Caco-2 (cell line): ENCODE measurements at regions of chr13 and their contacts with region 1.

Region 1: GRCh38 chr13:81872581-81872980 is 1531.7 kb upstream of the SPRY2 start:
- DNase-seq: peak in 1 of 2 experiments; percentile 53
- H3K4me3 ChIP-seq: no peak overlapping the region
- H3K4me3 Mint-ChIP-seq: no peak overlapping the region
- H3K27ac Mint-ChIP-seq: no peak overlapping the region
- H3K4me1 ChIP-seq: no peaks in the 10 kb centered on the region
- H3K4me1 Mint-ChIP-seq: peaks cover 6% of the 10 kb centered on the region
- H3K27me3 ChIP-seq: no peaks in the 10 kb centered on the region
- H3K27me3 Mint-ChIP-seq: peaks cover 3% of the 10 kb centered on the region
- CTCF ChIP-seq: peak; percentile 32 to 36

Region 2: DNA sequence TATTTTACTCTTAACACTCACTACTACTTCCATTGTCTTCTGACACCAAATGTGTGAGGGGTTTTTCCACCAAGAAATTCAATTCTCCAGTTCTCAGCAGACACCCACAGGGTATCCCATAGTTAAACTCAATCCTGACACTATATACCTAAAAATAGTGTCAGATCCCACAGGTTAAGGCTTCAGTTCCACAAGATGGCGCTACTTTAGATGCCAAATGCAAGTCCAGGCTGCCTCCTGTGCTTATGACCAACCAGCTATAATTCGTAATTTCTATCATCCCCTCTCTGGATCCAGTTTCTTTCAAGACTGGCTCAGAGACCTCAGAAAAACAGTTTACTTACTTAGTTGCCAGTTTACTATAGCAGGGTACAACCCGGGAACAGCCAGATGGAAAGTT is 385.4 kb before region 1 on chr13:
- CTCF ChIA-PET with region 1: no interaction called
- POLR2A ChIA-PET with region 1: no interaction called
- intact Hi-C with region 1: loop called (anchors 1 kb)
- DNase-seq: peak; percentile 52 to 58
- H3K4me3 ChIP-seq: no peak overlapping the region
- H3K4me3 Mint-ChIP-seq: no peak overlapping the region
- H3K27ac Mint-ChIP-seq: no peak overlapping the region
- H3K4me1 ChIP-seq: no peaks in the 10 kb centered on the region
- H3K4me1 Mint-ChIP-seq: no peaks in the 10 kb centered on the region
- H3K27me3 ChIP-seq: no peaks in the 10 kb centered on the region
- H3K27me3 Mint-ChIP-seq: no peaks in the 10 kb centered on the region
- CTCF ChIP-seq: peak; percentile 57 to 74

Region 3: DNA sequence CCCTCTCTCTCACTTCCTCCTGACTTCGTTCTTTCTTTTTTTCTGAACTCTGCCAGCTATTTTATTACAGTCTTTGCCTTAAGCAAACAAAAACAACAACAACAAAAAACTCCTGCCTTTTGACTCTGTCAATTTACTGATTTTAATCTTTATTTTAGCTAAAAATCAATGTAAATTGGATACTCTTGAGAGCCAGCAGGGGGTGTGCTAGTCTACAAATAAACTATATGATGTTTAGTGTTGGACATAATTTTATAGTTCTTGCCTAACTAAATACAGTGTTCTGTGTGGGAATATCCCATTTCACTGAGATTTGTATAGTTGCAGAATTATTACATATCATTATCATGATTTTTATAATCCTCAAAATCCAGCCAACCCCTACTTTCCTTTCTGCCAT is 331.8 kb before region 1 on chr13:
- CTCF ChIA-PET with region 1: no interaction called
- POLR2A ChIA-PET with region 1: no interaction called
- intact Hi-C with region 1: loop called (anchors 2 kb)
- DNase-seq: no peak
- H3K4me3 ChIP-seq: no peak overlapping the region
- H3K4me3 Mint-ChIP-seq: no peak overlapping the region
- H3K27ac Mint-ChIP-seq: no peak overlapping the region
- H3K4me1 ChIP-seq: no peaks in the 10 kb centered on the region
- H3K4me1 Mint-ChIP-seq: no peaks in the 10 kb centered on the region
- H3K27me3 ChIP-seq: no peaks in the 10 kb centered on the region
- H3K27me3 Mint-ChIP-seq: no peaks in the 10 kb centered on the region
- CTCF ChIP-seq: peak in 1 of 2 experiments; percentile 26